CD8-positive, alpha-beta T cell (primary cell): ENCODE measurements at regions of chr7 and their contacts with region 1.

Region 1: DNA sequence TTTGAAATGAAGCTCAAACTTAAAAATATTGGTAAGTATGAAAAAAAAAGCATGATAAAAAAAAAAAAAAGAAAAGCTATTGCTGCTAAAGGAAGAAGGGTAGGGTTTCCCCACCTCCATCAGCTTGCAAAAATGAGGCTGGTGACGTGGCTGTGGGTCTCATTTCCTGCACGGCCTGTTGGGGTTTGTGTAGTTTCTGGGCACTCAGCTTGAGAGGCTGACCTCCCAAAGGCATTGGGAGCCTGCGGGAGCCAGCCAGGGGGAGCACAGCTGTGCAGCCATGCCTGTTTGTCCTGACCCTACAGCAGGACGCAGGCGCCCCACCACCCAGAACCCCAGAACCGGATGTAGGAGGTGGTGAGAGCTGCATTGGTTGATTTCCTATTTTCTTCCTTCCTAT is 48.8 kb upstream of the CARD11 start:
- DNase-seq: peak; percentile 33 to 94 (median 73)
- ATAC-seq: peak; percentile 82
- H3K4me3 ChIP-seq: peak overlapping the region; percentile 15 to 31
- H3K4me3 Mint-ChIP-seq: peak overlapping the region; percentile 55
- H3K27ac ChIP-seq: peak overlapping the region; percentile 56 to 96
- H3K27ac Mint-ChIP-seq: peak overlapping the region; percentile 96
- H3K4me1 ChIP-seq: peaks cover 74% of the 10 kb centered on the region
- H3K4me1 Mint-ChIP-seq: peaks cover 74% of the 10 kb centered on the region
- H3K27me3 ChIP-seq: no peaks in the 10 kb centered on the region
- H3K27me3 Mint-ChIP-seq: no peaks in the 10 kb centered on the region
- CTCF ChIP-seq: no peak

Region 2: GRCh38 chr7:3117488-3118231 is 25.2 kb after region 1 on chr7:
- CTCF ChIA-PET with region 1: interaction called, 4 read pairs
- POLR2A ChIA-PET with region 1: interaction called, 7 read pairs
- intact Hi-C with region 1: loop called (anchors 2 kb)
- DNase-seq: peak in 4 of 9 experiments; percentile 35 to 69 (median 51)
- ATAC-seq: peak; percentile 54
- H3K4me3 ChIP-seq: peak overlapping the region in 1 of 2 experiments; percentile 40
- H3K4me3 Mint-ChIP-seq: peak overlapping the region; percentile 90
- H3K27ac ChIP-seq: peak overlapping the region in 1 of 2 experiments; percentile 4
- H3K27ac Mint-ChIP-seq: peak overlapping the region; percentile 97
- H3K4me1 ChIP-seq: peaks cover 61% of the 10 kb centered on the region
- H3K4me1 Mint-ChIP-seq: peaks cover 79% of the 10 kb centered on the region
- H3K27me3 ChIP-seq: no peaks in the 10 kb centered on the region
- H3K27me3 Mint-ChIP-seq: no peaks in the 10 kb centered on the region
- CTCF ChIP-seq: no peak